ENCODE measurements at regions of chr19 and their contacts with region 1.

Region 1: GRCh38 chr19:47190167-47190727 is 40.8 kb downstream of the BBC3 start:
- DNase-seq: peak; percentile 76
- H3K4me3 ChIP-seq: peak overlapping the region in 1 of 4 donors; percentile 12
- H3K27ac ChIP-seq: peak overlapping the region; percentile 77 to 83 (median 80)
- H3K4me1 ChIP-seq: peaks cover 0 to 59% (median 51%) of the 10 kb centered on the region in 4 donors
- H3K27me3 ChIP-seq: no peaks in the 10 kb centered on the region
- CTCF ChIP-seq: no peak
- EP300 ChIP-seq: no peak
- POLR2A ChIP-seq: no peak

Region 2: GRCh38 chr19:47157431-47158321 is 32.6 kb before region 1 on chr19:
- intact Hi-C with region 1: loop called (anchors 5 kb)
- DNase-seq: peak; percentile 74
- H3K4me3 ChIP-seq: no peak overlapping the region
- H3K27ac ChIP-seq: peak overlapping the region; percentile 80 to 89 (median 84)
- H3K4me1 ChIP-seq: peaks cover 0 to 86% (median 81%) of the 10 kb centered on the region in 4 donors
- H3K27me3 ChIP-seq: no peaks in the 10 kb centered on the region
- CTCF ChIP-seq: peak in 1 of 4 experiments; percentile 29
- EP300 ChIP-seq: no peak
- POLR2A ChIP-seq: no peak

Measured in sigmoid colon (tissue), 7 donors.